AG04449 (cell line): ENCODE measurements at regions of chr14 and their contacts with region 1.

Region 1: GRCh38 chr14:32259368-32260013 is 56.4 kb upstream of the RNU6-8 start:
- DNase-seq: no peak
- H3K4me3 ChIP-seq: no peak overlapping the region
- CTCF ChIP-seq: no peak

Region 2: DNA sequence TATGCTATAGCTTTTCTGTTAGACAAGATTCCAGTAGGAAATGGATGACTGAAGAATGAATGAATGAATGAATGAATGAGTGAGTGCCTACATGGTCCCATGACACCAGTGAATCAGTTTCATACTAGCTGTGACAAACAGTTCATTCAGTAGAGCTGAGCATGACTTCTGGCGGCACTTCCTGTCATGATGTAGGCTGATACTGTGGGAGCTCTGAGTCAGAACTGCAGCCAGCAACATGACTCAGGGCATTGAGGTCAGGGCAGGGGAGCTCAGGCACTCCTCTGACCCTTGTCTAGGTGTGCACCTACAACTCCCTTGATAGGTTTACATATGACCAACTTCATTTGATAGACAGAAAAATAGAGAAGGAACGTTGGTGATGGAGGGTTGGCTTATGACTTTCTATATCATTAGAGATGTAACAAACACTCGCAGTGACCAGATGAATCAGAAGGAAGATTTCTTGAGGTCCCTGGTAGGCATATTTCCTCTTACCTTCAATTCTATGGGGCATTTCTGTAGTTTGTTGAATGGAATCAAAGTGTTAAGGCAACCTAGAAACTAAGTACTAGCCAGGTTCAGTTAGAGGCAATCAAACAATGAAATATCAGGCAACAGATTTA is 321.7 kb before region 1 on chr14:
- CTCF ChIA-PET with region 1: interaction called, 60 read pairs
- POLR2A ChIA-PET with region 1: no interaction called
- DNase-seq: no peak
- H3K4me3 ChIP-seq: no peak overlapping the region
- CTCF ChIP-seq: no peak

Region 3: GRCh38 chr14:32076278-32077080 is 183.0 kb before region 1 on chr14:
- CTCF ChIA-PET with region 1: interaction called, 236 read pairs
- POLR2A ChIA-PET with region 1: no interaction called
- DNase-seq: peak; percentile 69
- H3K4me3 ChIP-seq: peak overlapping the region; percentile 89
- CTCF ChIP-seq: no peak

Region 4: DNA sequence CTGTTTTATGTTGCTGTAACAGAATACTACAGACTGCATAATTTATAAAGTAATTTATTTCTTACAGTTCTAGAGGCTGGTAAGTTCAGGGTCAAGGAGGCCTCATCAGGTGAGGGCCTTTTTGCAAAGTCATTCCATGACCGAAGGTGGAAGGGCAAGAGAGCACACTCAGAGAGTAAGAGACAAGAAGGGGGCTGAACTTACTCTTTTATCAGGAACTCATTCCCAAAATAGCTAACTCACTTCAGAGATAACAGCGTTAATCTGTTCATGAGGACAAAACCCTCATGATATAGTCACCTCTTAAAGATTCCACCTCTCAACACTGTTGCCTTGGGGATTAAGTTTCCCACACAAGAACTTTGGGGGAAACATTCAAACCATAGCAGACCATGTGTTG is 109.1 kb before region 1 on chr14:
- CTCF ChIA-PET with region 1: no interaction called
- POLR2A ChIA-PET with region 1: no interaction called
- DNase-seq: no peak
- H3K4me3 ChIP-seq: no peak overlapping the region
- CTCF ChIP-seq: no peak

Region 5: DNA sequence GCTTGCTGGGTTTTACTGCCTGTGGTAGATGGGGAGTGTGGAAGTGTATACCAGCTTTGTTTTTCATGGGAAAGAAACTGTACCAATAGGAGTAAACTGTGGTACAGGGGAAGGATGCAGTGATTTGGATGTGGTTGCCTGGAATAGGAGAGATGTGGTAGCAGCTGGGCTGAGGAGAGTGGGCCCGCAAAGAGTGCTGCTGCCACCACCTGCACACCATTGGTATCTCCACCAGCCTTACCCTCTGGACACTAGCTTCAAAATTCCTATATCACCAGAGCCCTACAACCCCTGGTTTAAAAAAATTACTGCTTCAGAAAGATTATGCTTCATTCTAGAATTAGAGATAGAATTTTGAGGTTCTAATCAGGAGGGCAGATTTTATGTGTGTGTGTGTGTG is 123.2 kb after region 1 on chr14:
- CTCF ChIA-PET with region 1: interaction called, 16 read pairs
- POLR2A ChIA-PET with region 1: no interaction called
- DNase-seq: no peak
- H3K4me3 ChIP-seq: no peak overlapping the region
- CTCF ChIP-seq: peak; percentile 67

Region 6: GRCh38 chr14:32469388-32470160 is 210.1 kb after region 1 on chr14:
- CTCF ChIA-PET with region 1: interaction called, 41 read pairs
- POLR2A ChIA-PET with region 1: no interaction called
- DNase-seq: no peak
- H3K4me3 ChIP-seq: no peak overlapping the region
- CTCF ChIP-seq: peak; percentile 26